ENCODE measurements at regions of chr18 and their contacts with region 1.

Region 1: DNA sequence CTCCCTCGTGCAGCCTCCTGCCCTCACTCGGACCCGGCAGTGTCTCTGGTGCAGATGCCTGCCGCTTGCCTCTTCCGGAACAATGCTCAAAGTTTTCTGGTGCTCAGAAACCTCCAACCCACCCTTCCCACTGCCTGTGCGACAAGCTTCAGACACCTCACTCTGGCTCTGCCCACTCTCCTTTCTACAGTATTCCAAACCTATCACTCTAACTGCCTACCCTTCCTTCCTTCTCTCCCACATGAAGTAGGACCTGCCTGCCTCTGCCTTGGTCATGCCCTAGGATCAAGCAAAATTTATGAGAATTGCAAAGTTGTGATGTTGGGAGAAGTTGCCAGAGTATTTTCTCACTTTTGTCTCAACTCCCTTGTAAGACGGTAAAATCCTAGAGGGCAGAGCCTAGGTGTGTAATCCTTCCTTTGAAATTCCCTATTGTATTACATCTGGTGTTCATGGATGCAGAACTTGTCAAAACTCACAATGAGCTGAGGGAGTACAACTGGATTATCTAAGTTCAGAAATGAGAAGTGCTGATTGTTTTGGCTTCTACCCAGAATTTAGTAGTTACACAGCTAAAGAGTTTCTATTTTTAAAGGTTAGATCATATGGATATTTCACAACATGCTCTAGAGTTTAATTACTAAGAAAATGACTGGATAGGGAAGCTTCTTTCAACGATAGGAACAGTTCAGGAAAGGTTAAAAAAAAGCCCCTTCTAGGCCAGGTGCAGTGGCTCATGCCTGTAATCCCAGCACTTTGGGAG is 7.2 kb downstream of the NPC1 start:
- DNase-seq: no peak

Region 2: GRCh38 chr18:23538870-23539269 is 40.2 kb before region 1 on chr18:
- intact Hi-C with region 1: loop called in 1 of 2 experiments (anchors 5 kb)
- DNase-seq: no peak

Region 3: DNA sequence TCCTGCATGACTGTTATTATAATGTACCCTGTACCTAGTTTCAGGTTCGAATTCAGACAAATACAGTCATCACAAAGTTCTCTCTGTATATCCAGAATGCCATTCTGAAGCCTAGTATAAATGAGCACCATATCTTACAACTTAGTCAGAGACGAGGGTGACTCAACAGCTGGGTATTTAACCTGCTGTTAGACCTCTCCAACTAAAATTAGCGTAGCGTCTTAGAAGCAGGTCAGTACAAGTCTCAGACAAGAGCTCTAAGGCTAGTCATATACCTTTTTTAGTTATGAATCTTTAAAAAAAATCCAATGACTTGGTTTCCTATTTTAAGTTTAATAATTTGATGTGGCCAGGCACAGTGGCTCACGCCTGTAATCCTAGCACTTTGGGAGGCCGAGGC is 633.9 kb after region 1 on chr18:
- intact Hi-C with region 1: no loop called
- DNase-seq: no peak

Measured in posterior vena cava (tissue), 2 donors.